K562 (cell line): ENCODE measurements at regions of chrX and their contacts with region 1.

Region 1: GRCh38 chrX:110002300-110003166 is at the start of gene TMEM164:
- DNase-seq: peak; percentile 85 to 92 (median 88)
- ATAC-seq: peak; percentile 89
- H3K4me3 ChIP-seq: peak within 1 kb of the TSS; percentile 68
- H3K27ac ChIP-seq: peak within 1 kb of the TSS; percentile 92
- H3K4me1 ChIP-seq: peaks cover 28 to 64% of the 10 kb centered on the region in 2 experiments
- H3K27me3 ChIP-seq: no peaks in the 10 kb centered on the region
- CTCF ChIP-seq: no peak
- EP300 ChIP-seq: no peak
- POLR2A ChIP-seq: peak; percentile 77
- RAD21 ChIP-seq: no peak
- polyA plus RNA-seq, gene TMEM164: 2.4 to 3.0 TPM

Region 2: DNA sequence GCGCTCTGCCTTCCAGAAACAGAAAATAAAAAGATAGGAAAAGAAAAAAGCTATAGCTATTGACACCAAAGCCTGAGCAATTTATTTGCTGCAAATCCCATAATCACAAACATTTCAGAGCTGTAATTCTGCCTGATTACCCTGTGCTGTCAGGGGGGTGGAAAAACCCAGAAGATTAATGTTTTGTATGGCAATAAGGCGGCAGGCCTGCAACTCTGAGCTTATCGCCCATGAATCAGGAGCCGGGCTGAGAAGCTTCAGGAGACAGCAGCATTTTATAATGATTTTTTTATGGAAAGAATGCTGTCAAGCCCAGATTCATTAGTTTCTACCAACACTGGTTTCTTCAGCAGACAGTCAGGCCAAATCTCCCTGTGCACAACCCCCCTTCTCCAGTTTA is 82.2 kb before region 1 on chrX:
- CTCF ChIA-PET with region 1: no interaction called
- POLR2A ChIA-PET with region 1: no interaction called
- in situ Hi-C with region 1: no loop called
- intact Hi-C with region 1: loop called (anchors 5 kb)
- DNase-seq: peak in 3 of 4 experiments; percentile 14 to 53 (median 52)
- ATAC-seq: peak; percentile 74
- H3K4me3 ChIP-seq: no peak overlapping the region
- H3K27ac ChIP-seq: no peak overlapping the region
- H3K4me1 ChIP-seq: peaks cover 0 to 5% of the 10 kb centered on the region in 2 experiments; a peak in 2 of 5 replicates
- H3K27me3 ChIP-seq: no peaks in the 10 kb centered on the region
- CTCF ChIP-seq: no peak
- EP300 ChIP-seq: no peak
- POLR2A ChIP-seq: no peak
- RAD21 ChIP-seq: no peak

Region 3: GRCh38 chrX:109934434-109934833 is 68.1 kb before region 1 on chrX:
- CTCF ChIA-PET with region 1: no interaction called
- POLR2A ChIA-PET with region 1: no interaction called
- in situ Hi-C with region 1: no loop called
- intact Hi-C with region 1: no loop called
- DNase-seq: no peak
- ATAC-seq: no peak
- H3K4me3 ChIP-seq: no peak overlapping the region
- H3K27ac ChIP-seq: no peak overlapping the region
- H3K4me1 ChIP-seq: peaks cover 0 to 8% of the 10 kb centered on the region in 2 experiments; a peak in 2 of 5 replicates
- H3K27me3 ChIP-seq: no peaks in the 10 kb centered on the region
- CTCF ChIP-seq: no peak
- EP300 ChIP-seq: no peak
- POLR2A ChIP-seq: no peak
- RAD21 ChIP-seq: no peak

Region 4: GRCh38 chrX:109959356-109959871 is 43.1 kb before region 1 on chrX:
- CTCF ChIA-PET with region 1: no interaction called
- POLR2A ChIA-PET with region 1: no interaction called
- in situ Hi-C with region 1: no loop called
- intact Hi-C with region 1: loop called (anchors 5 kb)
- DNase-seq: peak; percentile 64 to 81 (median 70)
- ATAC-seq: peak; percentile 91
- H3K4me3 ChIP-seq: no peak overlapping the region
- H3K27ac ChIP-seq: peak overlapping the region; percentile 85
- H3K4me1 ChIP-seq: peaks cover 0 to 40% of the 10 kb centered on the region in 2 experiments
- H3K27me3 ChIP-seq: no peaks in the 10 kb centered on the region
- CTCF ChIP-seq: no peak
- EP300 ChIP-seq: peak; percentile 94
- POLR2A ChIP-seq: no peak
- RAD21 ChIP-seq: no peak